HCT116 (cell line): ENCODE measurements at regions of chr15 and their contacts with region 1.

Region 1: GRCh38 chr15:65318870-65319356 is 14.4 kb downstream of the RNU5B-1 start:
- DNase-seq: peak; percentile 66
- ATAC-seq: peak; percentile 99
- H3K4me3 ChIP-seq: no peak overlapping the region
- H3K27ac ChIP-seq: no peak overlapping the region
- H3K4me1 ChIP-seq: no peaks in the 10 kb centered on the region
- H3K27me3 ChIP-seq: no peaks in the 10 kb centered on the region
- CTCF ChIP-seq: peak; percentile 77 to 96 (median 92)
- POLR2A ChIP-seq: no peak
- RAD21 ChIP-seq: peak; percentile 98

Region 2: GRCh38 chr15:65384895-65385858 is 66.3 kb after region 1 on chr15:
- CTCF ChIA-PET with region 1: interaction called, 39 read pairs
- POLR2A ChIA-PET with region 1: interaction called, 6 read pairs
- RAD21 ChIA-PET with region 1: interaction called, 5 to 11 read pairs
- intact Hi-C with region 1: loop called (anchors 1 kb)
- DNase-seq: peak; percentile 74
- ATAC-seq: peak; percentile 87
- H3K4me3 ChIP-seq: peak overlapping the region; percentile 39 to 59
- H3K27ac ChIP-seq: peak overlapping the region; percentile 70
- H3K4me1 ChIP-seq: peaks cover 8 to 21% of the 10 kb centered on the region in 2 experiments
- H3K27me3 ChIP-seq: no peaks in the 10 kb centered on the region; the same call in 1 of the 2 replicates
- CTCF ChIP-seq: peak; percentile 88 to 97 (median 93)
- POLR2A ChIP-seq: no peak
- RAD21 ChIP-seq: peak; percentile 93

Region 3: GRCh38 chr15:65400760-65401610 is 82.1 kb after region 1 on chr15:
- CTCF ChIA-PET with region 1: interaction called, 21 read pairs
- POLR2A ChIA-PET with region 1: interaction called, 4 read pairs
- RAD21 ChIA-PET with region 1: interaction called in 1 of 2 experiments, 8 read pairs
- intact Hi-C with region 1: loop called (anchors 1 kb)
- DNase-seq: peak; percentile 56
- ATAC-seq: peak; percentile 95
- H3K4me3 ChIP-seq: no peak overlapping the region
- H3K27ac ChIP-seq: no peak overlapping the region
- H3K4me1 ChIP-seq: peaks cover 6 to 20% of the 10 kb centered on the region in 2 experiments
- H3K27me3 ChIP-seq: no peaks in the 10 kb centered on the region
- CTCF ChIP-seq: peak; percentile 73 to 96 (median 80); a peak in 5 of 6 replicates
- POLR2A ChIP-seq: no peak
- RAD21 ChIP-seq: peak; percentile 85

Region 4: DNA sequence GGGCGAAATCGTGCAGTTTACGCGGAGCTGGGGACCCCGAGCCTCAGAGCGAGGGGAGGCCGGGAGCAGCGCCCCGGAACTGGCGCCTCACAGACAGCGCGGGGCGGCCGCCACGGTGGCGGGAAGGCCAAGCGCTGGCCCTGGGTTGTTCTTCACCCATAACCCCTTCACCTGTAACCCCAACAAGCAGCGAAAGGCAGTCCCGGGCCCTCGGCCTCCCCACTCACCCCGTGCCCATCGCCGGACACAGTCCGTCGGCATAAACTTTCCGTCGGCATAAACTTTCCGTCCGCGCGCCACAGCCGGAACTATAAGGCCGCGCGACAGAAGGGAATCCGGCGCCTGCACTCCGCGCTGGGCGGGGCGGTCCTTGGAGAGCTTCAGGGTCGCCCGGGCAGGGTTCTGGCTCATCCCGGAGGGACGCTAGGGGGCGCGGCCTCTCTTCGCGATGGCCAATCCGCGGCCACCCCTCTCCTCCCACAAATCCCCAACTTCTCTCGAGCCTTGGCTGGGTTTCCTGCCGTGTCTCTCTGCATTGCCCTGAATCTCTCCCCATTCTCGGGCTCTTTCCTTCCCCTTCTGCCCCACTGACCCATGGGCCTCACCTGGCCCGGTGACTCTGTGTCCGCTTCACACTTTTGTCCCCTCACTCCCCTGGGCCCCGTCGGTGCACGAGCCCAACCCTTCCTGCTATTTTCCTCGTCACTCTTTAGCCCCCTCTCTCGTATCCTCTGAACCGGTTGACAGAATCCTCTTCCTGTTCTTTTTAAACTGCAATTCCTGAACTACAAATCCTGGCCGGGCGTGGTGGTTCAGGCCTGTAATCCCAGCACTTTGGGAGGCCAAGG is 292.2 kb after region 1 on chr15 and contains the start of gene INTS14:
- CTCF ChIA-PET with region 1: no interaction called
- POLR2A ChIA-PET with region 1: no interaction called
- RAD21 ChIA-PET with region 1: no interaction called
- intact Hi-C with region 1: no loop called
- DNase-seq: peak; percentile 91
- ATAC-seq: peak; percentile 99
- H3K4me3 ChIP-seq: peak within 1 kb of the TSS; percentile 72 to 91
- H3K27ac ChIP-seq: peak within 1 kb of the TSS; percentile 82
- H3K4me1 ChIP-seq: peaks cover 15 to 19% of the 10 kb centered on the region in 2 experiments
- H3K27me3 ChIP-seq: no peaks in the 10 kb centered on the region
- CTCF ChIP-seq: peak; percentile 21 to 58 (median 42); a peak in 5 of 6 replicates
- POLR2A ChIP-seq: peak; percentile 79
- RAD21 ChIP-seq: peak; percentile 68
- total RNA-seq, gene INTS14: 50.1 TPM